ENCODE measurements at regions of chr22 and their contacts with region 1.

Region 1: GRCh38 chr22:41746567-41747400 is 47.5 kb downstream of the MEI1 start:
- DNase-seq: peak; percentile 44
- H3K4me3 ChIP-seq: no peak overlapping the region
- H3K27ac ChIP-seq: no peak overlapping the region
- H3K27me3 ChIP-seq: peaks cover 27% of the 10 kb centered on the region
- CTCF ChIP-seq: peak; percentile 88

Region 2: DNA sequence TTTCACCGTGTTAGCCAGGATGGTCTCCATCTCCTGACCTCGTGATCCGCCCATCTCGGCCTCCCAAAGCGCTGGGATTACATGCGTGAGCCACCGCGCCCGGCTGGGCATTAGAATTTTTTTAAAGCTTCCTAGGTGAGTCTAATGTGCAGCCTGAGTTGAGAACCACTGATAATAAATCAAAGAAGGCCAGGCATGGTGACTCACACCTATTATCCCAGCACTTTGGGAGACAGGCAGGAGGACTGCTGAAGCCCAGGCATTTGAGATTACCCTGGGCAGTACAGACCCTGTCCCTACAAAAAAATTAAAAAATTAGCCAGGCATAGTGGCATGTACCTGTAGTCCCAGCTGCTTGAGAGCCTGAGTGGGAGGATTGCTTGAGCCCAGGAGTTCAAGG is 33.8 kb before region 1 on chr22:
- CTCF ChIA-PET with region 1: interaction called, 12 read pairs
- POLR2A ChIA-PET with region 1: no interaction called
- DNase-seq: no peak
- H3K4me3 ChIP-seq: no peak overlapping the region
- H3K27ac ChIP-seq: no peak overlapping the region
- H3K27me3 ChIP-seq: peaks cover 22% of the 10 kb centered on the region
- CTCF ChIP-seq: no peak

Region 3: GRCh38 chr22:41732096-41732772 is 14.6 kb before region 1 on chr22:
- CTCF ChIA-PET with region 1: interaction called, 24 read pairs
- POLR2A ChIA-PET with region 1: no interaction called
- DNase-seq: no peak
- H3K4me3 ChIP-seq: no peak overlapping the region
- H3K27ac ChIP-seq: no peak overlapping the region
- H3K27me3 ChIP-seq: no peaks in the 10 kb centered on the region
- CTCF ChIP-seq: no peak

Region 4: DNA sequence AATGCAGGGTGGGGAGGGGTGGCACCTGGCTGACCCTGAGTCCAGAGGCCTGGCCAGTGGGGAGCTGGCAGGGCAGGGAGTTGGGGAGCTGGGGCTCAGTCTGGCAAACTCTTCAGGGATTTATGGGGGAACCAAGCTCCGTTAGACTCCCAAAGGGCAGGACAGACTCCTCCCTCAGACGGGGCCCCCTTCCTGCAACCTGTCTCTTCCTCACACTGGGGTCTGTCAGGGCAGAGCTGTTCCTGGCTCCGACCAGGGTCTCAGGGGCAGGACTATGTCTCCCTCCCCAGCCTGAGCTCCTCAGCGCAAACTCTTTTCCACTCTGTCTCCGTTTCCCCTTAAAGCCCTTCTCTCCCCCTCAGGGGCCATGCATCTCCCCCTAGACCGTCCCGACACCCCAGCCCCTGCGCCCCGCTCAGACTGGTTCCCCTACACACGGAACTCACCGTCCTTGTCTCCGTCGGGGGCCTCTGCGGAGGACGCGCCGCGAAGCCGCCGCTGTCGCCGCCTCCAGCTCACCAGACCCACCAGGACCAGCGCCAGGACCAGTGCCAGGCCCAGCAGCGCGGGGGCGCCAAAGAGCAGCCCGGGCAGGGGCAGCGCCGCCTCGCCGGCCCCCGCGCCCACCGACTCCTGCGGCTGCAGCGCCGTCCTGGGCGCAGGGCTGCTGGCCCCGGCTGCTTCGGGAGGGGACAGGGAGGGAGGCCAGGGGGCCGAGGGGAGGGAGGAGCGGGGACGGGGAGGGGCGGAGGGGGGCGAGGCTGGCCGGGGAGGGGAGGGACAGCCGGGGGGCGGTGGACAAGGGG is 179.1 kb after region 1 on chr22:
- CTCF ChIA-PET with region 1: interaction called, 22 read pairs
- POLR2A ChIA-PET with region 1: no interaction called
- DNase-seq: no peak
- H3K4me3 ChIP-seq: peak overlapping the region; percentile 38
- H3K27ac ChIP-seq: no peak overlapping the region
- H3K27me3 ChIP-seq: peaks cover 12% of the 10 kb centered on the region
- CTCF ChIP-seq: peak; percentile 57

Region 5: GRCh38 chr22:41946629-41947423 is 200.0 kb after region 1 on chr22 and contains the start of gene CENPM:
- CTCF ChIA-PET with region 1: interaction called, 119 read pairs
- POLR2A ChIA-PET with region 1: no interaction called
- DNase-seq: peak; percentile 79
- H3K4me3 ChIP-seq: peak within 1 kb of the TSS; percentile 93
- H3K27ac ChIP-seq: no peak within 1 kb of the TSS
- H3K27me3 ChIP-seq: no peaks in the 10 kb centered on the region
- CTCF ChIP-seq: no peak
- polyA plus RNA-seq, gene CENPM: 5.1 and 6.8 TPM in 2 replicates

Measured in AG04450 (cell line).